Stomach (tissue), 19 donors: ENCODE measurements at regions of chr12 and their contacts with region 1.

Region 1: DNA sequence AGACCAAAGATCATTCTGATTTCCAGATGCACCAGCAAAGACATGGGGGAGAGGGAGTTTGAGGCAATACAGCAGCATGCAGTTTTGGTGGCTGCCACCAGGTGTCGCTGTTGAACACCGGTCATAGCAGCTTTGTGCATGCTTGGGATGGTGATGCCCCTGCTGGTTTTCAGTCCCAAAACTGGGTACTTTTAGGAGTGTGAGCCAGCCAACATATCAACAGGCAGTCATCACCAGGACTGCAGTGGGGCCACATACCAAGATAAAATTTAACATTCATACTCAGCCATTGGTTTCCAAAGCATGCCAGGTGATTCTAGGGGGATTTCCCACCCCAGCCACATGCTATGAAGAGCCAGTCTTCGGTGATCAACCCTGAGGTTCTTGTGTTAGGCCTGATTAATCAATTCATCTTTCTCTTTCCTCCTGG is 64.2 kb downstream of the PHETA1 start:
- DNase-seq: no peak
- H3K4me3 ChIP-seq: no peak overlapping the region
- H3K27ac ChIP-seq: no peak overlapping the region
- H3K4me1 ChIP-seq: no peaks in the 10 kb centered on the region
- H3K27me3 ChIP-seq: no peaks in the 10 kb centered on the region
- CTCF ChIP-seq: peak in 3 of 7 experiments; percentile 16 to 41 (median 23)
- EP300 ChIP-seq: no peak
- POLR2A ChIP-seq: no peak

Region 2: DNA sequence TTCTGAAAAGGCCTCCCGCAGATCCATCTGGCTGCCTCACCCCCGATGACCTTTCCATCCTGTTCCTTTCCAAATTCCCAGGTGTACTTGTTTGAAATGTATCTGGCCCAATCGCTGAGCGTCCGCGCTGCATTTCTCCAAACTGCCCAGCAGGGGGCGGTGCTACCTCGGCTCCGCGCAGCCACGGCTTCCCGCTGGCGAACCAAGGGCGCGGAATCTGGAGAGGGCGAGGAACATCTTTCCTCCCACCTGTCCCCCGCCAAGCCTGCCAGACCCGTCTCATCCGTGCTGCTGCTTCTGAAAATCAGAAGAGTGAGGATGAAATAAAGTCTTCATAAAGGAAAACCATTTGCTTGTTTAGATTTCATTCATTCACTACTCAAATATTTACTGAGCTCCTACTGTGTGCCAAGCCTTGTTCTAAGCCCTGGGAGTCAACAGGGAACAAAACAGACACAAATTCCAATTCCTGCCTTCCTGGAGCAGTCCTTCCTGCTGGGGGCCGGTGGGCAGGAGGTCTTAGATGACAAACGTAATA is 367.5 kb before region 1 on chr12:
- intact Hi-C with region 1: loop called (anchors 10 kb)
- DNase-seq: peak; percentile 54 to 82
- H3K4me3 ChIP-seq: no peak overlapping the region
- H3K27ac ChIP-seq: no peak overlapping the region
- H3K4me1 ChIP-seq: peaks cover 0 to 8% (median 4%) of the 10 kb centered on the region in 4 donors
- H3K27me3 ChIP-seq: peaks cover 0 to 78% (median 9%) of the 10 kb centered on the region in 3 donors
- CTCF ChIP-seq: peak in 5 of 7 experiments; percentile 47 to 90 (median 81)
- EP300 ChIP-seq: no peak
- POLR2A ChIP-seq: no peak